ENCODE measurements at regions of chr5 and their contacts with region 1.

Region 1: DNA sequence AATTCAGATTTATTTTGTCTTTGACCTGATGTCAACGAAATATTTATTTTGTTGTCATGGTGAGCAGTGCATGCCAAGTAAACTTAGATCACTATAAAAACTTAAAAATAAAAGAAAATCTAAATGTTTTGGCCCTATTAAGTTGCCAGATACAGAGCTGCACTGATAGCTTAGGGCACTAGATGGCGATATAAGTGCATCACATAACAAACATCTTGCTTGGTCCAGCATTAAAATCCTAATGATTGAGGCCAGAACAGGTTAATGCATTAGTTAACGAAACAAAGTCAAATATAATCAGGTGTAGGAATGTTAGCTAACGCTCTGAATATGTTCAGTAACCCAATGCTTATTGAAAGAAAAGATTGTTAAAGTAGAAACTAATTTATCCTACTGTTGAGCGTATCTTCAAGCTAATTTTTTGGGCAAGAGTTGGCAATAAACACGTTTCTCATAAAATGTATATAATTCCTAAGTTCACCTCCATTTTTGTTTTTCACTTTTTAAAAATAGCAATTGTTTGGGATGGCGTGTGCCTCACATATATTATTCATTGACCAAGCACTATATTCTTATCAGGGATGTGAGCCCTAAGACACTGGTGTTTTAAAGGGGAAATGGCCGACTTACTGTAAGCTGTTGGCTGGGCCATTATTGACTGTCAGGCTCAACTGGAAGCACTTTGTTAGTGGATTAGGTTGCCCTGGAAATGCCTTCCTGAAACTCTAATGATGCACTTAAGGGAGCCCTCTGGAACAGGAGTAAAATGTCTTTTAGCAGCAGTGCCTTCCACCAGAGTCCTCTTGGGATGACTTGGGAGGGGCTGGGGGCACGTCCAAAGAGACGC is 33.3 kb downstream of the KCTD16 start:
- DNase-seq: peak in 1 of 2 experiments; percentile 55
- H3K4me3 ChIP-seq: no peak overlapping the region
- H3K4me3 Mint-ChIP-seq: peak overlapping the region; percentile 66
- H3K27ac Mint-ChIP-seq: no peak overlapping the region
- H3K4me1 ChIP-seq: peaks cover 5% of the 10 kb centered on the region; the same call in 1 of the 2 replicates
- H3K4me1 Mint-ChIP-seq: peaks cover 7% of the 10 kb centered on the region
- H3K27me3 ChIP-seq: no peaks in the 10 kb centered on the region; the same call in 1 of the 2 replicates
- H3K27me3 Mint-ChIP-seq: peaks cover 27% of the 10 kb centered on the region
- CTCF ChIP-seq: peak; percentile 82

Region 2: GRCh38 chr5:144308906-144309670 is 105.1 kb after region 1 on chr5:
- CTCF ChIA-PET with region 1: no interaction called
- POLR2A ChIA-PET with region 1: no interaction called
- intact Hi-C with region 1: loop called (anchors 10 kb)
- DNase-seq: peak; percentile 38 to 45
- H3K4me3 ChIP-seq: no peak overlapping the region
- H3K4me3 Mint-ChIP-seq: no peak overlapping the region
- H3K27ac Mint-ChIP-seq: no peak overlapping the region
- H3K4me1 ChIP-seq: peaks cover 31% of the 10 kb centered on the region
- H3K4me1 Mint-ChIP-seq: peaks cover 15% of the 10 kb centered on the region
- H3K27me3 ChIP-seq: no peaks in the 10 kb centered on the region
- H3K27me3 Mint-ChIP-seq: no peaks in the 10 kb centered on the region
- CTCF ChIP-seq: no peak

Region 3: GRCh38 chr5:144467792-144468191 is 263.8 kb after region 1 on chr5:
- CTCF ChIA-PET with region 1: no interaction called
- POLR2A ChIA-PET with region 1: no interaction called
- intact Hi-C with region 1: loop called (anchors 5 kb)
- DNase-seq: peak; percentile 43 to 60
- H3K4me3 ChIP-seq: no peak overlapping the region
- H3K4me3 Mint-ChIP-seq: no peak overlapping the region
- H3K27ac Mint-ChIP-seq: no peak overlapping the region
- H3K4me1 ChIP-seq: no peaks in the 10 kb centered on the region
- H3K4me1 Mint-ChIP-seq: peaks cover 6% of the 10 kb centered on the region
- H3K27me3 ChIP-seq: no peaks in the 10 kb centered on the region
- H3K27me3 Mint-ChIP-seq: no peaks in the 10 kb centered on the region
- CTCF ChIP-seq: peak; percentile 34 to 73

Region 4: GRCh38 chr5:145008876-145009530 is 805.0 kb after region 1 on chr5:
- CTCF ChIA-PET with region 1: no interaction called
- POLR2A ChIA-PET with region 1: no interaction called
- intact Hi-C with region 1: loop called (anchors 5 kb)
- DNase-seq: no peak
- H3K4me3 ChIP-seq: no peak overlapping the region
- H3K4me3 Mint-ChIP-seq: no peak overlapping the region
- H3K27ac Mint-ChIP-seq: no peak overlapping the region
- H3K4me1 ChIP-seq: no peaks in the 10 kb centered on the region
- H3K4me1 Mint-ChIP-seq: no peaks in the 10 kb centered on the region
- H3K27me3 ChIP-seq: no peaks in the 10 kb centered on the region
- H3K27me3 Mint-ChIP-seq: no peaks in the 10 kb centered on the region
- CTCF ChIP-seq: no peak

Region 5: GRCh38 chr5:145237843-145238242 is 1033.9 kb after region 1 on chr5:
- CTCF ChIA-PET with region 1: interaction called, 6 read pairs
- POLR2A ChIA-PET with region 1: no interaction called
- intact Hi-C with region 1: loop called (anchors 1 kb)
- DNase-seq: peak; percentile 57 to 60
- H3K4me3 ChIP-seq: no peak overlapping the region
- H3K4me3 Mint-ChIP-seq: no peak overlapping the region
- H3K27ac Mint-ChIP-seq: no peak overlapping the region
- H3K4me1 ChIP-seq: no peaks in the 10 kb centered on the region
- H3K4me1 Mint-ChIP-seq: no peaks in the 10 kb centered on the region
- H3K27me3 ChIP-seq: no peaks in the 10 kb centered on the region
- H3K27me3 Mint-ChIP-seq: peaks cover 4% of the 10 kb centered on the region
- CTCF ChIP-seq: peak; percentile 62 to 71

Region 6: DNA sequence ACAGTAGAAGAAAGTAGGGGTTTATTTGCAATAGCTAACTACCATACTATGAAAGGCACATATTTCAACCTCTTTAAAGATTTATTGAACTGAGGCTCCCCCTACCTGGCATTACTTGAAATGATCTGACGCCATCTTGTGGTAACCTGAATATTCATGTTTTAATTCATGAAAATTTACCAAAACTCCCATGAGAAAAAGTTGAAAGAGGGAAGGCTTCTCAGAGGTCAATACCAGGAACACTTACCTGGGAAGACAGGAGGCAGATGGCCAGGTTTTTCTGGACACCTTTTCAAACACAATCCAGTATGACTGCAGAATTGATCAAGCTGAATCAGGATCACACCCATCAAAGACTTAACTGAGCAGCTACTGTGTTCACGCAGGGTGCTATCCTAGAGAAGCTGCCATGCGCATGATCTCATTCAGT is 1621.8 kb after region 1 on chr5:
- CTCF ChIA-PET with region 1: no interaction called
- POLR2A ChIA-PET with region 1: no interaction called
- intact Hi-C with region 1: loop called (anchors 10 kb)
- DNase-seq: peak in 1 of 2 experiments; percentile 45
- H3K4me3 ChIP-seq: no peak overlapping the region
- H3K4me3 Mint-ChIP-seq: no peak overlapping the region
- H3K27ac Mint-ChIP-seq: no peak overlapping the region
- H3K4me1 ChIP-seq: no peaks in the 10 kb centered on the region
- H3K4me1 Mint-ChIP-seq: peaks cover 16% of the 10 kb centered on the region
- H3K27me3 ChIP-seq: no peaks in the 10 kb centered on the region
- H3K27me3 Mint-ChIP-seq: no peaks in the 10 kb centered on the region
- CTCF ChIP-seq: peak; percentile 77 to 94